ENCODE measurements at regions of chr5 and their contacts with region 1.

Region 1: DNA sequence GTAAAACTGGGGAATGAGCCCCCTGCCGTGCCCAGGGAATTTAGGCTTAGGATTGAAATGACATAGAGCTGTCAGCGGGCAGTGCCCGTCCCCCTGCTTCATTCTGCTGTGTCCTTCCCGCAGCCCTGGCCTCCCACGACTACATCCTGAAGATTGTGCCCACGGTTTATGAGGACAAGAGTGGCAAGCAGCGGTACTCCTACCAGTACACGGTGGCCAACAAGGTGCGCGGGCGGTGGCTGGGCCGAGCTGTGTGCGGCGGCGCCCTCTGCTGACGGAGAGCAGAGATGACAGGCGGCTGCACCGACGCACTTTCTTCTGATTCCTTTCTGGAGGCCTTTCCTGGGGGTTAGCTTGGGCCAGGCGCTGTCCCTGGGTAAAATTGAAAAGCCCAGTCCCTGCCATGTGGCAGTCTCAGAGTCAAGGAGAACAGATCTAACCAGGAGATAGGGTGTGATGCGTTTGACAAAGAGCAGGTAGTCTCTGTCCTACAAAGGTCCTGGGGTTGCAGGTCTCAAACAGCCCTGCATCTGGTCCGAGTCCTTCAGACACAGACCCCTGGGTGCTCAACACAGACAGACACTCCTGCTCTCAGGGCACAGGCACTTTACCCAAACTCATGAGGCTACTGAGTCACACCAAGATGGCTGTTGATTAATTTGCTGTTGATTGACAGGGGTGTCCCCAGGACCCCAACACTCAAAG is 26.8 kb upstream of the RPL26L1 start:
- DNase-seq: no peak
- H3K4me3 ChIP-seq: no peak overlapping the region
- H3K27me3 ChIP-seq: no peaks in the 10 kb centered on the region
- CTCF ChIP-seq: peak; percentile 95

Region 2: DNA sequence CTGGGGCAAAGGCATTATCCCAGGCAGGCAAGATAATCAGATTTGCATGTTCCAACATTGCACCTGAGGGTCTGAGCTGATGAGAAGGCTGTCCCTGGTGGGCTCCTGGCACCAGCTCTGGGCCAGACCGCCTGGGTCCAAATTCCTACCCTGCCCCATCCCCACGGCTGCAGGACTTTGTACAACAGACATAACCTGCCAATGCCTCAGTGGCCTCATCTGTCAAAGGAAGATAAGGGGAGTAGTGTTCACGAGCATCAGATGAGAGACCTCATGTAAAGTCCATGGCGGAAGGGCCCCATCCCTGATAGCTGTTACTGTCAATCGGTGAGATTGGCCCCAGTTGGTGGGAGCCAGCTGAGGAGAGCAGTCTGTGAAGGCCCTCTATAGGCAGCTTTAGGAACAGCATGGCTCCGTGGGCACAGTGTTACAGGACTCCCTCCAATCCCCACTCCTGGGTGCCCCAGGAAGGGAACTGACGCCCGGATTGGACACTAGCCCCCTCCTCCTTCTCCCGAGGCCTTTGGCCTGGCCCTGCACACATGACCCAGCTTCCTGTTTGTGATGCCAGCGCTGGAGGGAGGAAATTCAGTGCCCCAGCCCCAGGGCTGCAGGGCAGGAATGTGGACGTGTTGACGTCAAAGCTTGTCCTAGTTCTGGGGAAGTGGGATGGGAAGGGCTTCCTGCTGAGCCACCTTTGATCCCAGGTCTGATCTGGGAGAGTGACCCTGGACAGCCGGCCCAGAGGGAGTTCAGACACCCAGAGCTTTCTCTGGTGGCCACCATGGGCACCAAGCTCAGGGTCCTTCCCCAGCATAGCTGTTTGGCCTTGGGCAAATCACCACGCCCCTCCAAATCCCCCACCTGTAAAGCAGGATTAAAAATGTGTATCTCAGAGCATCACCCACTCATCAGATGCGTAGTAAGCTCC is 217.7 kb before region 1 on chr5:
- CTCF ChIA-PET with region 1: interaction called, 441 read pairs
- POLR2A ChIA-PET with region 1: interaction called, 3 read pairs
- DNase-seq: no peak
- H3K4me3 ChIP-seq: no peak overlapping the region
- H3K27me3 ChIP-seq: no peaks in the 10 kb centered on the region; the same call in 1 of the 2 replicates
- CTCF ChIP-seq: peak; percentile 91

Region 3: GRCh38 chr5:172733131-172733973 is 199.1 kb before region 1 on chr5:
- CTCF ChIA-PET with region 1: interaction called, 11 read pairs
- POLR2A ChIA-PET with region 1: interaction called, 4 read pairs
- DNase-seq: peak; percentile 99
- H3K4me3 ChIP-seq: no peak overlapping the region
- H3K27me3 ChIP-seq: no peaks in the 10 kb centered on the region
- CTCF ChIP-seq: no peak

Region 4: DNA sequence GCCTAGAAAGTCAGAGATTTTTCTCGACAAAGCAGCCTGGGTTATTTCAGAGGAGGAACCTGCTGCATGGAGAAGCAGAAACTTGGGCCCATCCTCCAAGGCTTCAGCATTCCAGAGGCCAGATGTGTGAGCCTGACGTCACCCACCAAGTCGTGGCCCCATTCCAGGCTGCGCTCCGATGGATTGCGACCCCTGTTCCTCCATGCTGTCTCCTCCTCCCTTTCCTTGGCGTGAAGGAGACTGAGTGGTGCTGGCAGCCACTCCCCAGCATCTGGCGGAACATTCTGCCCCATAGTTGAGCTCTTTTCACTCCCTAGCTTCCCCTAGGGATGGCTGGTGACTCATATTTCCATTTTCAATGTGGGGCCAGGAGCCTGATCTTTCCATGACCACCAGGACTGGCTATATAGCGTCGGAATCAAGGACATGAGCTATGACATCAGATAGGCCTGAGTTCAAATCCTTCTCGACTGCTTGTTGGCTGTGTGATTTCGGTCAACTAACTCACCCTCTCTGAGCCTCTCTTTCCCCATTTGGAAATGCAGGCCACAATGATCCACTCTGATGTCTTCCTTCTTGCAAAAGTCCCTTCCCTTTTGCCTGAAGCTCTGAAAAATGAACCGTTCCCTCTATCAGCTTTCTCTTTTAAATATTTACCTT is 137.0 kb before region 1 on chr5:
- CTCF ChIA-PET with region 1: interaction called, 19 read pairs
- POLR2A ChIA-PET with region 1: no interaction called
- DNase-seq: peak; percentile 96
- H3K4me3 ChIP-seq: no peak overlapping the region
- H3K27me3 ChIP-seq: no peaks in the 10 kb centered on the region
- CTCF ChIP-seq: peak; percentile 12; the same call in 1 of the 2 replicates

Region 5: GRCh38 chr5:172904643-172905347 is 27.7 kb before region 1 on chr5:
- CTCF ChIA-PET with region 1: interaction called, 10 read pairs
- POLR2A ChIA-PET with region 1: no interaction called
- DNase-seq: no peak
- H3K4me3 ChIP-seq: no peak overlapping the region
- H3K27me3 ChIP-seq: no peaks in the 10 kb centered on the region
- CTCF ChIP-seq: no peak

Region 6: DNA sequence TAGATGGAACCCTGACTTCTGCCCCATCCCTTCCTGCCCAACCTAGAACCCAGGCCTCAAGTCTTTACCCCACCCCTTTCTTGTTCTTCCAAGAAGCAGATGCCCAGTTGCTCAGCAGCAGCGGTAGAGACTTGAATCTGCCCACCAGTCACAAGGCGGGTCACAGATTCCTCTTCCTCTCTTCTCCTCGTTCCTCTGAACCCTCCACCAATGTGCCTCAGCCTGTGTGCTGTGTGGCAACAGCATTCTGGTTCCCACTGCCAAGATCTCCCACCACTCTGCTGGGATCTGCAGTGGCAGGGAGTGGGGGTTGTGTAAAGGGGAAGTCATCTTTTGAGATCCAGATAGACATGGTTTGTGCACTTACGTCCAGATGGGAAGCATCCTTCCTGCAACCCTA is 18.9 kb after region 1 on chr5:
- CTCF ChIA-PET with region 1: interaction called, 14 read pairs
- POLR2A ChIA-PET with region 1: no interaction called
- DNase-seq: no peak
- H3K4me3 ChIP-seq: no peak overlapping the region
- H3K27me3 ChIP-seq: no peaks in the 10 kb centered on the region
- CTCF ChIP-seq: no peak

Region 7: GRCh38 chr5:174535667-174536066 is 1603.2 kb after region 1 on chr5:
- CTCF ChIA-PET with region 1: no interaction called
- POLR2A ChIA-PET with region 1: no interaction called
- DNase-seq: no peak
- H3K4me3 ChIP-seq: no peak overlapping the region
- H3K27me3 ChIP-seq: no peaks in the 10 kb centered on the region
- CTCF ChIP-seq: no peak